ENCODE measurements at regions of chr11 and their contacts with region 1.

Region 1: GRCh38 chr11:78645226-78646202 is 70.8 kb upstream of the NARS2 start:
- DNase-seq: no peak
- H3K4me3 ChIP-seq: no peak overlapping the region
- H3K27me3 ChIP-seq: peaks cover 4% of the 10 kb centered on the region
- CTCF ChIP-seq: peak; percentile 90

Region 2: DNA sequence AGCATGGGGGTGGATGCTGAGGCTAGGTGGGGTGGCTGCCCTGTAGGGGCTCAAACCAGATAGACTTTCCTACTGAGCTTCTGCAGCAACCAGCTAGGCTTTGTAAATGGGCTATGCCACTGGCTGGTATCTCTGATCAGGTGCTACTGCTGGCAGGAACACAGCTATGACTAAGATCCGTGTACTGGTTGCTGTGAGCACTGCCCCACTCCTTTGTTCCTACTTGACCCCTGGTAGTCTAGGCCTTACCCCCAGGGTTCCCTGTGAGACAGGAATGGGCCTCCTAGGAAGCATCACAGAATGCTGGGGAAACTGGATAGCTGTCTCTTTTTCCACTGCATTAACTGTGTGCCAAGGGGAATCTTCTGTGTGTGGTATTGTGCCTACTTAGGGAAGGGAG is 169.4 kb before region 1 on chr11:
- CTCF ChIA-PET with region 1: no interaction called
- POLR2A ChIA-PET with region 1: no interaction called
- DNase-seq: no peak
- H3K4me3 ChIP-seq: no peak overlapping the region
- H3K27me3 ChIP-seq: no peaks in the 10 kb centered on the region
- CTCF ChIP-seq: no peak

Region 3: DNA sequence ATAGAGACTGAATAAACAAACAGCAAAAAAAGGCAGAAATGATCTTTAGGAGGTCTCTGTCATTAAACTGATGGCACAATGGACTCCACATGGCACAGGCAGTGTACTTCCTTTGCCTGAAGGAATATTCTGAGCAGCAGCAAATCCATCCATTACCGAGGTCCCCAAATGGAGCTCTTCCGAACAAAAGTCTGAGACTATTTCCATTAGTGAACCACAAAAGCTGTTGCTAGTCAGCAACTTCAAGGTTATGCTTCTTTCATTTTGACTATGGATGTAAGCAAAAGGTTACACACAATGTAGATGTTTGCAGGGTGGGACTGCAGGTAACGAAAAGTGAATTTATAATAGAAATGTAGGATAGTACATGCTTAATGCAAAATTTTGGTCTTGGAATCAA is 85.4 kb before region 1 on chr11:
- CTCF ChIA-PET with region 1: no interaction called
- POLR2A ChIA-PET with region 1: no interaction called
- DNase-seq: no peak
- H3K4me3 ChIP-seq: no peak overlapping the region
- H3K27me3 ChIP-seq: no peaks in the 10 kb centered on the region
- CTCF ChIP-seq: no peak

Region 4: DNA sequence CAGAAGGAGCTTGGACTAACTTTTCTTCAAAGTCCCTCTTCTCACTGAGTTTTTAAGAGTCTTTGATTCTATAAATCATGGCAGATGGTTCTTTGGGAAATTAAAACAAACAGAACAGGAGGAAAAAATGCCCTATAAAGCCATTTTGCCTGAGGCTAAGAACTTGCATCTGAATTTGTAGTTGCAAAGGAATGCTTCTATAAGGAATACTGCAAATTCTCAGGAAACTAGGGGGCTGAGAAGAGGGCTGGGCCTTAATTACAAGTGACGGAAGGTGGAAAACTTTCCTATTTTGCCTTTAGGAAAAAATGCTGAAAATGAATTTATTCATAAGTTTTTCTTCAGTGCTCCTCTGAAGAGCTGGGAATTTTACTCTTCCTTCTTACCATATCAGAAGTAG is 19.1 kb after region 1 on chr11:
- CTCF ChIA-PET with region 1: interaction called, 21 read pairs
- POLR2A ChIA-PET with region 1: no interaction called
- DNase-seq: peak; percentile 47
- H3K4me3 ChIP-seq: no peak overlapping the region
- H3K27me3 ChIP-seq: no peaks in the 10 kb centered on the region
- CTCF ChIP-seq: no peak

Region 5: DNA sequence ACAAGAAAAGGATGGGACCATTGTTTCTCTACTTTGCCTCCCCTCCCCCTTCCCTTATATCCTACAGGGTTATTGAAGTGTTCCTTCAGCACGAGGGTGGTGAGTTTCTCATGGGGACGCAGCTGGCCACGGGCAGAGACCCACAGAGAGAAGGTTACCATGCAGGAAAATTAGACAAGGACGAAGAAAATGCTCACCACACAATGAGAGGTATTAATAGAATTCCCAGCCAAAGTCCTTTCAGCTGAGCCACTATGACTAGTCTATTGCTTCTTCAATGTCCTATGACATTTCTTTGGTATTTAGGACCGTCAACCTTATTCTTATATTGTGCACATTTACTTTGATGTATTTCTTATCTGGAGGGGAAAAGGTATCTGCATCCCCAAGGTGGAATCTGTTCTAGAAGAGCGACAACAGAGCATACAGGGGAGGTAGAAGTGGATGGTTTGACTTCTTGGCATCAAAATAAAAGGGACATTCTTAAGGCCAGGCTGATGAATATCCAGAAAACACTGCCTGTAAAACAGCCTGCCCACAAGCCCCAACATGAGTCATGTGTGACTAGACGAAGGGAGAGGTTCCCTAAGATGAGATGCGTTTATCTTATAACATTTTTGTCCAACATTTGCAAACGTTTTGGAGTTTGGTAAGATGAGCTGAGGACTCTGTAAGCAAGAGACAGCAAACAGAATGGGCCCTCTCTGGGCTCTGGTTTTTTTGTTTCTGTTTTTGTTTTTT is 139.0 kb after region 1 on chr11:
- CTCF ChIA-PET with region 1: interaction called, 11 read pairs
- POLR2A ChIA-PET with region 1: no interaction called
- DNase-seq: no peak
- H3K4me3 ChIP-seq: no peak overlapping the region
- H3K27me3 ChIP-seq: no peaks in the 10 kb centered on the region
- CTCF ChIP-seq: no peak

Region 6: DNA sequence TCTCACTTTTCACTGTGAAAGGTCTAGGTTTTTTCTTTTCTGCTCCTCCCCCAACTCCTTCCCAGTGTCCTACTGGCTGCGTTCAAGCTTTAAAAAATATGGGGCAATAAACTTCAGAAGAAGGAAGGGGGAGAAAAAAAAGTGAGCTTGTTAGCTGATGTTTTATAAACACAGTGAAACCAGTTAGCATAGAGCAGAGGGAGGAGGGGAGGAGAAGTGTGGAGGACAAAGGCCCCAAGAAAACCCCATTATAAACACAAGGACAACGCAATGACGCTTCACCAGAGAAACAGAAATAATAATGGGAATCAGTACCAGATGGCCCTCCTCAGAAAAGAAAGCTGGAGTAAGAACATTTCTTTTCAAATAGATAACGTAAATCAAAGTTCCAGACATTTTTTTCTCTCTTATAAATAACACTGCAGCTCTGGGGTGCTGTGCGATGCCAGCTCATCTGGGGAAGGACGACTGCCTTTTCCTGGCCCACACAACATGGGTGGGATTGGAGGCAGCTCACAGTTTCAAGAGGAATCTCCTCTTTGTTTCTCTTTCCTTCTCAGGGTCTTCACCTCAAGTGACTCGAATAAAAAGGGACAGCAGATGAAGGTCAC is 164.5 kb after region 1 on chr11:
- CTCF ChIA-PET with region 1: interaction called, 11 read pairs
- POLR2A ChIA-PET with region 1: no interaction called
- DNase-seq: peak; percentile 61
- H3K4me3 ChIP-seq: no peak overlapping the region
- H3K27me3 ChIP-seq: no peaks in the 10 kb centered on the region
- CTCF ChIP-seq: no peak

Region 7: DNA sequence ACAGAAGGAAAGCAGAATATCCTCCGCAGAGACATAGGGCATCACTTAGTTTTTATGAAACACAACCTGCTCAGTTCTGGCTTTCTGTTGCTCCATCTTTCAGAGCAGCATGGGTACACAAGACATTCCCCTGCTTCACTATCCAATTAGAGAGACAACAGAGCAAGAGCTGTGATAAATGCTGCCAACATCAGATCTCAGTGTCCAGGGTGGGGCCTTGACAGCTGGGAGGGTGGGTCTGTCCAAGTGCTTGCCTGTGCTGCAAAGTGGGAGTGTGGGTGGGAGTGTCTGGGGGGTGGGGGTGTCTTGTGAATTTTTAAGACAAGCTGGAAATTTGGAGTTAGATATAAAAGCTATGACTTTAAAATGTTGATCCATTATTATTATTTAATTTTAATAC is 425.7 kb after region 1 on chr11:
- CTCF ChIA-PET with region 1: interaction called, 28 read pairs
- POLR2A ChIA-PET with region 1: no interaction called
- DNase-seq: no peak
- H3K4me3 ChIP-seq: no peak overlapping the region
- H3K27me3 ChIP-seq: no peaks in the 10 kb centered on the region
- CTCF ChIP-seq: no peak

Region 8: GRCh38 chr11:79092791-79093353 is 447.4 kb after region 1 on chr11:
- CTCF ChIA-PET with region 1: interaction called, 69 read pairs
- POLR2A ChIA-PET with region 1: no interaction called
- DNase-seq: peak; percentile 100
- H3K4me3 ChIP-seq: no peak overlapping the region
- H3K27me3 ChIP-seq: no peaks in the 10 kb centered on the region
- CTCF ChIP-seq: no peak

Measured in BJ (cell line).